MCF 10A (cell line): ENCODE measurements at regions of chr1 and their contacts with region 1.

Region 1: GRCh38 chr1:153990468-153991150 is at the start of gene RPS27:
- DNase-seq: peak; percentile 100
- H3K4me3 Mint-ChIP-seq: peak within 1 kb of the TSS; percentile 90
- H3K27ac Mint-ChIP-seq: peak within 1 kb of the TSS; percentile 98
- H3K4me1 Mint-ChIP-seq: peaks cover 33% of the 10 kb centered on the region
- H3K27me3 Mint-ChIP-seq: no peaks in the 10 kb centered on the region
- CTCF ChIP-seq: no peak
- total RNA-seq, gene RPS27: 3,026 and 3,064 TPM in 2 replicates

Region 2: GRCh38 chr1:153617675-153618074 is 372.9 kb before region 1 on chr1:
- CTCF ChIA-PET with region 1: interaction called, 5 read pairs
- POLR2A ChIA-PET with region 1: interaction called, 7 read pairs
- intact Hi-C with region 1: loop called (anchors 5 kb)
- DNase-seq: peak; percentile 86
- H3K4me3 Mint-ChIP-seq: peak overlapping the region; percentile 90
- H3K27ac Mint-ChIP-seq: peak overlapping the region; percentile 76
- H3K4me1 Mint-ChIP-seq: peaks cover 47% of the 10 kb centered on the region
- H3K27me3 Mint-ChIP-seq: no peaks in the 10 kb centered on the region
- CTCF ChIP-seq: peak; percentile 90

Region 3: DNA sequence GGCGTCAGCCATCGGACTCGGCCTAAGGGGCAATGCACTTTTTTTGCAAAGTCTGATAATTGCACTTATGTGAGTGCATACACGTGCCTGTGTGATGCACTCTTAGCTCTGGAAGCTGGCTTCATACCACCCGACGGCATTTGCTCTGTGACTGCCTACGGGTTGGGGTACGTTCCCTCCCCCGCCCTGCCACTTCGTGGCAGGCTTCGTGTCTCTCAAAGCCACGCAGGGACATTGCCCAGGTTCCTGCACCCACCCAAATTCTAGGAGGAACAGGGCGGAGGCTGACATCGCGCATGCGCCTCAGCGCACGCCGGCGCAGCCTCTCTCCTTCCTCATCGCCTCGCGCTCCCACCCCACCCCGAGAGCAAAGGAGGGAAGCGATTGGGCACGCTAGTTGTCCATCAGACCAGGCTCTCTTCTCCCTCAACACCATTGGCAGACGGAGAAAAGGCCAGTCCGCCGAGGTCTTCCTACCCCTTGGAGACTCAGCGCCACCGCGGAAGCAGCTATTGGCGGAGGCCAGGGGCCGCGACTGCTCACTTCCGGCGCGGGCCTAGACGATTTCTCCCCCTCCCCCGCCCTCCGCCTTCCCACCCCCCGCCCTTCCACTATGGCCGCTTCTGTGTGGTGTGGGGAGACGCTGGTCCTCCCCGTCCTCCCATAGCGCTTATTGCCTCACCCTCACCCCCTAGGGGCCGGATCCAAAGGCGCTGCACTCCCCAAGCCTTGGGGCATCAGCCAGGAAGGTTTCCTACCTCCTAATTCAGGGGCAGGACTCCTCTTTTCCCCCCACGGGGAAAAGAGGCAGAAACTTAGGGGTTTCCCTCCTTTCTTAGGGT is 262.9 kb before region 1 on chr1 and contains the start of gene INTS3:
- CTCF ChIA-PET with region 1: interaction called, 3 read pairs
- POLR2A ChIA-PET with region 1: interaction called, 14 read pairs
- intact Hi-C with region 1: no loop called
- DNase-seq: peak; percentile 100
- H3K4me3 Mint-ChIP-seq: peak within 1 kb of the TSS; percentile 99
- H3K27ac Mint-ChIP-seq: peak within 1 kb of the TSS; percentile 98
- H3K4me1 Mint-ChIP-seq: peaks cover 21% of the 10 kb centered on the region
- H3K27me3 Mint-ChIP-seq: no peaks in the 10 kb centered on the region
- CTCF ChIP-seq: no peak
- total RNA-seq, gene INTS3: 68.7 and 88.3 TPM in 2 replicates

Region 4: GRCh38 chr1:153790966-153791647 is 199.5 kb before region 1 on chr1:
- CTCF ChIA-PET with region 1: interaction called, 80 read pairs
- POLR2A ChIA-PET with region 1: interaction called, 14 read pairs
- intact Hi-C with region 1: no loop called
- DNase-seq: peak; percentile 83
- H3K4me3 Mint-ChIP-seq: peak overlapping the region; percentile 4
- H3K27ac Mint-ChIP-seq: no peak overlapping the region
- H3K4me1 Mint-ChIP-seq: peaks cover 19% of the 10 kb centered on the region
- H3K27me3 Mint-ChIP-seq: peaks cover 14% of the 10 kb centered on the region
- CTCF ChIP-seq: no peak

Region 5: GRCh38 chr1:153827168-153827964 is 163.2 kb before region 1 on chr1:
- CTCF ChIA-PET with region 1: interaction called, 21 read pairs
- POLR2A ChIA-PET with region 1: interaction called, 12 read pairs
- intact Hi-C with region 1: no loop called
- DNase-seq: no peak
- H3K4me3 Mint-ChIP-seq: no peak overlapping the region
- H3K27ac Mint-ChIP-seq: peak overlapping the region; percentile 31
- H3K4me1 Mint-ChIP-seq: peaks cover 5% of the 10 kb centered on the region
- H3K27me3 Mint-ChIP-seq: no peaks in the 10 kb centered on the region
- CTCF ChIP-seq: peak; percentile 12

Region 6: DNA sequence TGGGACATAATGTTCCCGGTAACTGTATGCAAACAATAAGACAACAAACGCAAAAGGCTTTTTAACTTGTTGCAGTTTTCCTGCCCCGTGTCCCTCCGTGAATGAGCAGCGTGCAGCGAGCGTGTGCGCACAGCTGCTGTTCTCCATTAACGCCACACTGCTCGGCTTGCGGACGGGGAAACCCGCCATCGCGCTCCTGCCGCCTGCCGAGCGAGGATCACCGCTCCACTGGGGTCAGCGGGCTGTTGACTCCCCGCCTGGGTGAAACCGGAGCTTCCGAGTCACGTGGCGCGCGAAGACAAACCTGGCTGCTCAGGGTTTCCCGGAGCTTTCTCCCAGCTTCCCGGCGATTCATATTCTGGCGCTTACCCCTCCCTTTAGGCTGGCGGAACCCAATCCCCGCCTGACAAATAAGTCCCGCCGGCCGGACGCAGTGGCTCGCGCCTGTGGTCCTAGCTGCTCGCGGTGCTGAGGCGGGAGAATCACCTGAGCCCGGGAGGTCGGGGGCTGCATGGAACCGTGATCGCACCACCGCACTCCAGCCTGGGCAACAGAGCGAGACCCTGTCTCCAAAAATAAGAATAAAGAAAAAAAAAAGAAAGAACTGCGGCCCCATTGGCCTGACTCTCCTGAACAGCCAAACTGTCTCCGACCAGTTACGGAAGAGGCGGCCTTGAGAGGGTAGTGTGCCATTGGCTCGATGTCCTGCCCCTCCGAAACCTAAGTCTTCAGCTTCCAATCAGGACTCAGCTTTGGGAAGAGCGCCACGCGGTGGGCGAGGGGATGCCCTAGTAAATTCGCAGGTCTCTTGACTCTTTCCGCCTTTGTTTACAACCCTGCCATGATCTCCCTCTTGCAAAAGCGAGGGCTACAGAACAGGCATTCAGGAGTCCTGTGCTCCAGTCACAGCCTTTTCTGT is 23.3 kb before region 1 on chr1 and contains the start of gene CREB3L4:
- CTCF ChIA-PET with region 1: interaction called, 45 read pairs
- POLR2A ChIA-PET with region 1: interaction called, 358 read pairs
- intact Hi-C with region 1: loop called (anchors 1 kb)
- DNase-seq: peak; percentile 100
- H3K4me3 Mint-ChIP-seq: peak within 1 kb of the TSS; percentile 95
- H3K27ac Mint-ChIP-seq: peak within 1 kb of the TSS; percentile 94
- H3K4me1 Mint-ChIP-seq: peaks cover 40% of the 10 kb centered on the region
- H3K27me3 Mint-ChIP-seq: no peaks in the 10 kb centered on the region
- CTCF ChIP-seq: peak; percentile 32
- total RNA-seq, gene CREB3L4: 14.7 and 17.6 TPM in 2 replicates

Region 7: GRCh38 chr1:154272217-154272998 is 281.8 kb after region 1 on chr1 and contains the start of gene HAX1:
- CTCF ChIA-PET with region 1: no interaction called
- POLR2A ChIA-PET with region 1: interaction called, 12 read pairs
- intact Hi-C with region 1: loop called (anchors 1 kb)
- DNase-seq: peak; percentile 98
- H3K4me3 Mint-ChIP-seq: peak within 1 kb of the TSS; percentile 91
- H3K27ac Mint-ChIP-seq: peak within 1 kb of the TSS; percentile 96
- H3K4me1 Mint-ChIP-seq: peaks cover 29% of the 10 kb centered on the region
- H3K27me3 Mint-ChIP-seq: no peaks in the 10 kb centered on the region
- CTCF ChIP-seq: peak; percentile 96
- total RNA-seq, gene HAX1: 261 and 295 TPM in 2 replicates

Region 8: DNA sequence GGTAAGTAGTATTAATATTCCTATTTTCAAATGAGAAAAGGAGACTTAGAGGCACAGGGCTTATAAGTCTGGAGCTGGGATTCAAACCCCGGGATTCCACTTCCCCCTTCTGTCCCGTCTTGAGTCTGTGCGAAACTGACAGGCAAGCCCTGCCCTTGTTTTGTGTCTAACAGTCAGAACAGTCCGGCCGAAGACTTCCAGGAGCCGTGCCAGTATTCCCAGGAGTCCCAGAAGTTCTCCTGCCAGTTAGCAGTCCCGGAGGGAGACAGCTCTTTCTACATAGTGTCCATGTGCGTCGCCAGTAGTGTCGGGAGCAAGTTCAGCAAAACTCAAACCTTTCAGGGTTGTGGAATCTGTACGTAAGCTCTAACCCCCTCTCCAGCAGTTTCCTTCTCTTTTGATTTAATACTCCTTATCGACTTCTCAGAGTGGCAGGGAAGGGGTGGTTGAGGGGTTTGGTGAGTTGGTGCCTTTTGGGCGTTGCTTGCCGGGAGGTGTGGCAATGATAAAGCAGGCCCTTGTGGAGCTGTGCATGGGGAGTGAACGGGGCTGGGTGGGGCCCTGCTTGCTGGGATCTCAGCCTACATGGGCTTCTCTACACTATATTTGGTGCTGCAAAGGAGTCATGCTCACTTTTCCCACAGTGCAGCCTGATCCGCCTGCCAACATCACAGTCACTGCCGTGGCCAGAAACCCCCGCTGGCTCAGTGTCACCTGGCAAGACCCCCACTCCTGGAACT is 443.9 kb after region 1 on chr1:
- CTCF ChIA-PET with region 1: no interaction called
- POLR2A ChIA-PET with region 1: no interaction called
- intact Hi-C with region 1: no loop called
- DNase-seq: no peak
- H3K4me3 Mint-ChIP-seq: no peak overlapping the region
- H3K27ac Mint-ChIP-seq: peak overlapping the region; percentile 39
- H3K4me1 Mint-ChIP-seq: peaks cover 29% of the 10 kb centered on the region
- H3K27me3 Mint-ChIP-seq: no peaks in the 10 kb centered on the region
- CTCF ChIP-seq: no peak